Gastrocnemius medialis (tissue), 4 donors: ENCODE measurements at regions of chr2 and their contacts with region 1.

Region 1: DNA sequence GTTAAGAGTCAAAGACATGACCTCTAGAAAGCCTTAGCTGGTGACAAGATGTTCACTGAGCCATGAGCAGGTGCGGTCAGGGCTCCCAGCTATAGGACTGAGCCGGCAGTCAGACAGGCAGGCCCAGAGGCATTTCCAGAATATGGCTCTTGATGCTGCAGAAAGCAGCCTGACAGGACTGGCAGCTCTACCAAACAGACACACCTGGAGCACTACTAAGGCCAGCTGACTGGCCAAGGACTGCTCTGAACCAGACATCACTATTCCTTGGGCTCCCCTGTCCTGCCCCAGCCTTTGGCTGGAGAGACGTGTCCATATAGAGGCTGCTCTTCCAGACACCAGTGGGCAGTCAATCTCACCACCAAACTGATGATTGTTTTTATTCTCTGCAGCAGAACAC is 98.8 kb downstream of the RIF1 start:
- DNase-seq: no peak
- ATAC-seq: peak; percentile 5 to 20
- H3K4me3 ChIP-seq: no peak overlapping the region
- H3K27ac ChIP-seq: peak overlapping the region in 3 of 4 donors; percentile 63 to 71 (median 67)
- H3K4me1 ChIP-seq: no peaks in the 10 kb centered on the region
- H3K27me3 ChIP-seq: no peaks in the 10 kb centered on the region
- CTCF ChIP-seq: no peak
- POLR2A ChIP-seq: no peak

Region 2: DNA sequence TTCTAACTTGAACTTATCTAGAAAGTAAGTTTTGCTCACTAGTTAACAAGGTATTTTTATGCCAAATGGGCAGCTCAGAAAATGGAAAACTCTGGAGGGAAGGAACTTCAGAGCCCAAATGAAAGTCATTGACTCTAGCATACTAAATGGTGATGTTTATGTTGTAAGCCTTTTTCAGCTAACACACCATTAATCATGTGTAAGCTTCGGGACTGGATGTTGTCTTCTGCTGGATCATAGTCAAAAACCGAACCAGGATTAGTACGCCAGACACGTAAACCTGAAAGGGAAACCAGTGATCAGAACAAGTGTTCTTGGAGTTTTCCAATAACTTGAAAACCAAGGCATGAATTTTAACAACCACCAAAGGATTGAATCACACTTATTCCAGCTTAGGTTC is 17.0 kb before region 1 on chr2:
- in situ Hi-C with region 1: no loop called
- intact Hi-C with region 1: loop called (anchors 2 kb)
- DNase-seq: no peak
- ATAC-seq: peak in 1 of 2 donors; percentile 36
- H3K4me3 ChIP-seq: no peak overlapping the region
- H3K27ac ChIP-seq: peak overlapping the region; percentile 8 to 55 (median 31)
- H3K4me1 ChIP-seq: no peaks in the 10 kb centered on the region
- H3K27me3 ChIP-seq: no peaks in the 10 kb centered on the region
- CTCF ChIP-seq: no peak
- POLR2A ChIP-seq: no peak

Region 3: GRCh38 chr2:151551556-151551955 is 43.0 kb after region 1 on chr2:
- in situ Hi-C with region 1: no loop called
- intact Hi-C with region 1: loop called (anchors 5 kb)
- DNase-seq: no peak
- ATAC-seq: no peak
- H3K4me3 ChIP-seq: no peak overlapping the region
- H3K27ac ChIP-seq: peak overlapping the region in 3 of 4 donors; percentile 53 to 78 (median 66)
- H3K4me1 ChIP-seq: peaks cover 9 to 10% of the 10 kb centered on the region in 2 donors
- H3K27me3 ChIP-seq: no peaks in the 10 kb centered on the region
- CTCF ChIP-seq: no peak
- POLR2A ChIP-seq: no peak